Motor neuron (in vitro differentiated cells): ENCODE measurements at regions of chr1 and their contacts with region 1.

Region 1: DNA sequence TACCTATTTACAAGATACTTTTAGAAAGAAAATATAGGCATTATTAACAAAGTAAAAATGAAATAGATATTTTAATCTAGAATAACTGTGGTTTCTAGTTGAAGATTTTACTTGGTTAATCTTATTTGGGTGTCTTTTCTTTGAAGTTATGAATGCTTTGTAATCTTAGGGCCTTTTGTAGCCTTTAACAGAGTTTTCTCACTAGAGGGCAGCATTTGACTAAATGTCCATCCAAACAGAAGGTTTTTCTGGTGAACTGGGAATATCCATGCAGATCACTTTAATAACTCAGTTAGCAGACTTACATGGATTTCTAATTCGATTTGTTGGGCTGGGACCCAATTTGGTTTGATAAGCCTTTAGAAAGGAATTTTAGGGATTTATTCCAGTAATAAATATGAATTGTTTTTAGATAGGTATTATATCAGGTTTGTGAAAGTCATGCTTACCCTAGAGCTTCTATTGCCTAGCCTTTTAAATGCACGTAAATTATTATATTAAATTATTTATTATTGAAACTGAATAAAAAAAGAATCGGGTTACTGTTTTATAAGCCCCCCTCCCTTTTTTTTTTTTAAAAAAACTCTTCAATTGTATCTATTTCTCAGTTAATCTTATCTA is 119.7 kb downstream of the ZNF326 start:
- ATAC-seq: peak in 5 of 8 experiments; percentile 51 to 63 (median 57)
- H3K4me3 ChIP-seq: no peak overlapping the region
- H3K27ac ChIP-seq: no peak overlapping the region
- H3K4me1 ChIP-seq: no peaks in the 10 kb centered on the region

Region 2: GRCh38 chr1:89918127-89918793 is 196.4 kb before region 1 on chr1:
- in situ Hi-C with region 1: no loop called
- ATAC-seq: peak in 3 of 8 experiments; percentile 20 to 47 (median 37)
- H3K4me3 ChIP-seq: no peak overlapping the region
- H3K27ac ChIP-seq: no peak overlapping the region
- H3K4me1 ChIP-seq: peaks cover 0 to 12% of the 10 kb centered on the region in 2 donors

Region 3: DNA sequence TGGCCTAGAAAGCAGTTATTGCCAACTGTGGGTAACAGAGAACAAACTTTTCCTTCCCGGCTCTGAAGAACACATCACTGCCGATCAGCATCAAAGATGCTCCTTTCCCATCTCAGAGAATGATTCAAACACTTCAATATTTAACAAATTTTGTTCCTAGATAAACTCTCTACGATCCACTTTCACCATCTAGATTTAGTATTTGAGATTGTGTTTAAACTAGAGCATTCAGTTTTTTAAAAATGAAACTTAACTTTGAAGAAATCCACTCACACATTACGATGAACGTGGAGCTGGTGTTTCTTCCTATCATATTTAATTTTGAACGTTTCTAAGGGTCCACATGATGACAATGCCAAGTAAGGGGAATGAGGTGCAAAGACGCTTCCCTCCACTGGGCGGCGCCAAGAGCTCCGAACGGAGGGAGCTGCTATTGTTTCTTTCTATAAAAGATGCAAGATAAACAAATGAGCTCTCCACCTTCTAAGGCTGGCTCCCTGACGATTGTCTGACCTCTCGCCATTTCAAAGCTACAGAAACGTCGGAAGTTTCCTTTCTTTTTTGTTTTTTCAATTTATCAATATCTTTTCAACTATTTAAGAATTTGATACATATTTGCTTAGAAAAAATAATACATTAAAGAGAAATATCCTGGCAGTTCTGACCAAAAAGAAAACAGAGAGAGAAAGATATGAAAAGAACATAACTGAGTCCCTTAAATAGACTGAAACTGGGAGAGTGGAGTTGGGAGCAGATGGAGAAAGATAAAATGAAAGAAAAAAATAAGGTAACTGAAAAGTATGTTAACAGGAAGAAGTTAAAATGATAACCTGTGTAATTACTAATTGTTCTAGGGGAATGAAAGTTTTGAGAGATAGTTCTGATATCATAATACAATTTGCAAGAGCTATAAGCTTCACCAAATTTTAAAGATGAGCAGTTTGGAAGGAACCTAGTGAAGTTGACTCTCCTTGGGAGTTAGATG is 606.9 kb after region 1 on chr1:
- in situ Hi-C with region 1: loop called in 1 of 9 experiments (anchors 25 kb)
- ATAC-seq: peak in 3 of 8 experiments; percentile 29 to 61 (median 48)
- H3K4me3 ChIP-seq: no peak overlapping the region
- H3K27ac ChIP-seq: no peak overlapping the region
- H3K4me1 ChIP-seq: peaks cover 14 to 24% of the 10 kb centered on the region in 2 donors

Region 4: GRCh38 chr1:90964444-90965035 is 849.9 kb after region 1 on chr1:
- in situ Hi-C with region 1: loop called in 1 of 9 experiments (anchors 25 kb)
- ATAC-seq: peak in 3 of 8 experiments; percentile 33 to 57 (median 42)
- H3K4me3 ChIP-seq: no peak overlapping the region
- H3K27ac ChIP-seq: no peak overlapping the region
- H3K4me1 ChIP-seq: no peaks in the 10 kb centered on the region

Region 5: GRCh38 chr1:91165033-91165654 is 1050.5 kb after region 1 on chr1:
- in situ Hi-C with region 1: loop called in 7 of 9 experiments (anchors 25 kb)
- ATAC-seq: peak; percentile 98 to 100 (median 99)
- H3K4me3 ChIP-seq: no peak overlapping the region
- H3K27ac ChIP-seq: no peak overlapping the region
- H3K4me1 ChIP-seq: no peaks in the 10 kb centered on the region